ENCODE measurements at regions of chr2 and their contacts with region 1.

Region 1: DNA sequence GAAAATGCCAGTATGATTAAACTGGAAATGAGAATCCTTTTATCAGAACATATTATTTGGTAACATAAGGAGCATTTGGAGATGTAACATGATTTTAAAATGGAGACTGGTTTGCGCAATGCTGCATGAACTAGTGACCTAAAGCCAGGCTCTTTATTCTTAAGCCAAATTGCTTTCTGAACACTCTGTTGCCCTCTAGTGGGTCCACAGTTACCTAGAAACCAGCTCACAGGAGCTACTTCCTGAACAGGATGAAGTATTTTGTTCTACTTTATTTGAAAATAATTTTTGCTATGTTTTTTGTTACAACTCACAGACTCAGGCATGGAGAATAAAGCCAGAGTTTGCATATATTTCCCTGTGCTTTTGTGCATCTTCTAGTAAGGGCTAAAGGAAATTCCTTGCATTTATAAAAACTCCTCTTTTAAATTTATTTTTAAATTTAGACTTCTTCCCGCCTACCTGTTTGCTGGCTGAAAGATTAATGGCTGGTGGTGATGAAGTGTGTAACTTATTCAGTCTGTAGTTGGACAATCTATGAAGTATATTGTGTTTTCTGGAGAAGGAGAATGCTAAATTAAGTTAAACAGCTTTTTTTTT is 146.7 kb downstream of the PARD3B start:
- DNase-seq: no peak
- ATAC-seq: peak; percentile 84
- H3K4me3 ChIP-seq: no peak overlapping the region
- H3K27ac ChIP-seq: no peak overlapping the region
- H3K4me1 ChIP-seq: no peaks in the 10 kb centered on the region
- H3K27me3 ChIP-seq: no peaks in the 10 kb centered on the region

Region 2: DNA sequence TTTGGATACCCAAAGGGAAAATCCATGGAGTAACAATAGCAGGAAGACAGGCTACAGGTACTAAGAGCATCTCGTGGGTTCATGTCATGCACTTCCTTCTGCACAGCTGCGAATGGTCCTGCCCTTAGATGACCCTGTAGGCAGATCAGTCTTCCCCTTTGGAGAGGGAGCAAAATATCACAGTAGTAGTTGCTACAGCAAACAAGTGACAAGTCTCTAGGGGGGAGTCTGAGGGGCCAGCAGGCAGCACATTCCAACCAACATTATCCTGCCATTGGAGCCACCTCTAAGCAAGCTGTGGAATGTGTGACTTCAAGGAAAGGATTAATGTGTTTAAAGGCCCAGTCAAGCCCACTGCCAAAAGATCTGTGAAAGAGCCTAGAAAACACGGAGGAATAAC is 419.9 kb before region 1 on chr2:
- intact Hi-C with region 1: loop called in 1 of 2 experiments (anchors 10 kb)
- DNase-seq: no peak
- ATAC-seq: peak; percentile 57
- H3K4me3 ChIP-seq: no peak overlapping the region
- H3K27ac ChIP-seq: no peak overlapping the region
- H3K4me1 ChIP-seq: peaks cover 7 to 15% of the 10 kb centered on the region in 2 donors
- H3K27me3 ChIP-seq: no peaks in the 10 kb centered on the region

Region 3: DNA sequence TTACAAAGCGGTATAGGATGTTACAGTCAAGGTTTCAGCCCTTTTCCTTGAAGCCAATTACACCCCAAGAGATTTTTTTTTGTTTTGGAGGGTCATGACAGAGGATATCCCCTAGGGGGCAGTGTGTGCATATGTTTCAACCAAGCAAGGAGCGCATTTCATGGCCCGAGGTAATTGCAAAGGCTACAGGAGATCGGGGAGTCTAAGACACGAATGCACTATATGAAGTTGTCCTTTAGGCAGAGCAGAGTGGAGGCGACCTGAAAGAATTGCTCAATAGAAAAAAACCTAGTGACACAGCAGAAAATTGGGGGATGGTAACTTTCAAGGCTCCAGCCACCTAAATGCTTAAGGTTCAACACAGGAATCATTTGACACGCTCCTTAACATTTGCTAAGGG is 366.5 kb before region 1 on chr2:
- intact Hi-C with region 1: loop called (anchors 5 kb)
- DNase-seq: no peak
- ATAC-seq: peak; percentile 85
- H3K4me3 ChIP-seq: no peak overlapping the region
- H3K27ac ChIP-seq: no peak overlapping the region
- H3K4me1 ChIP-seq: no peaks in the 10 kb centered on the region
- H3K27me3 ChIP-seq: peaks cover 0 to 1% of the 10 kb centered on the region in 2 donors

Region 4: GRCh38 chr2:204972606-204973336 is 280.8 kb after region 1 on chr2:
- intact Hi-C with region 1: no loop called
- DNase-seq: no peak
- ATAC-seq: no peak
- H3K4me3 ChIP-seq: no peak overlapping the region
- H3K27ac ChIP-seq: no peak overlapping the region
- H3K4me1 ChIP-seq: no peaks in the 10 kb centered on the region
- H3K27me3 ChIP-seq: no peaks in the 10 kb centered on the region